Mammary epithelial cell (primary cell): ENCODE measurements at regions of chr6 and their contacts with region 1.

Region 1: GRCh38 chr6:140766999-140767398 is 1365.7 kb upstream of the GJE1 start:
- DNase-seq: peak; percentile 46
- H3K4me3 ChIP-seq: no peak overlapping the region
- H3K27ac ChIP-seq: no peak overlapping the region
- H3K4me1 ChIP-seq: peaks cover 4% of the 10 kb centered on the region
- H3K27me3 ChIP-seq: no peaks in the 10 kb centered on the region
- CTCF ChIP-seq: no peak

Region 2: GRCh38 chr6:139490482-139490881 is 1276.5 kb before region 1 on chr6:
- CTCF ChIA-PET with region 1: no interaction called
- dilution Hi-C with region 1: no loop called
- in situ Hi-C with region 1: no loop called
- intact Hi-C with region 1: loop called (anchors 10 kb)
- DNase-seq: no peak
- H3K4me3 ChIP-seq: no peak overlapping the region
- H3K27ac ChIP-seq: no peak overlapping the region
- H3K4me1 ChIP-seq: no peaks in the 10 kb centered on the region
- H3K27me3 ChIP-seq: no peaks in the 10 kb centered on the region
- CTCF ChIP-seq: no peak

Region 3: GRCh38 chr6:141290941-141291721 is 524.1 kb after region 1 on chr6:
- CTCF ChIA-PET with region 1: no interaction called
- dilution Hi-C with region 1: no loop called
- in situ Hi-C with region 1: no loop called
- intact Hi-C with region 1: no loop called
- DNase-seq: no peak
- H3K4me3 ChIP-seq: no peak overlapping the region
- H3K27ac ChIP-seq: no peak overlapping the region
- H3K4me1 ChIP-seq: no peaks in the 10 kb centered on the region
- H3K27me3 ChIP-seq: no peaks in the 10 kb centered on the region
- CTCF ChIP-seq: no peak